ENCODE measurements at regions of chr9 and their contacts with region 1.

Region 1: GRCh38 chr9:117907420-117907819 is 203.2 kb downstream of the TLR4 start:
- DNase-seq: no peak
- H3K4me3 ChIP-seq: no peak overlapping the region
- H3K27ac ChIP-seq: no peak overlapping the region
- H3K4me1 ChIP-seq: no peaks in the 10 kb centered on the region
- H3K27me3 ChIP-seq: no peaks in the 10 kb centered on the region
- CTCF ChIP-seq: no peak
- EP300 ChIP-seq: no peak
- POLR2A ChIP-seq: no peak

Region 2: DNA sequence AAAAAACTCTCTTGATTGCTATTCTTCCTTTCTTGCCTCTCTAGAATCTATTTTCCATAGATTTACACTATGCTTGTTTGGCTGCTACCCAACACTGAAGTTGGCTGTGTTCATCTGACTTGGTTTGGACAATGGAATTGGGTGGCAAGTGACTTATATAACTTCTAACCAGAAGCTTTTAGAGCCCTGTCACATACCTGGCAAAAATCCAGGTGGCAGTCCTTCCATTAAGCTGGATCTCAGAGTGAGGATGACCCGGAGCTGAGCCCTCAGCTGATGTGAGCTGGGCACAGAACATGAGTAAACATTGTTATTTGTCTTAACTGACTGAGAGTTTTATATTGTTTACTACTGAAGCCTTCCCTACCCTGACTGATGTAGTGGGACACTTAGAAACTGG is 22.5 kb after region 1 on chr9:
- in situ Hi-C with region 1: no loop called
- intact Hi-C with region 1: loop called (anchors 2 kb)
- DNase-seq: no peak
- H3K4me3 ChIP-seq: no peak overlapping the region
- H3K27ac ChIP-seq: no peak overlapping the region
- H3K4me1 ChIP-seq: no peaks in the 10 kb centered on the region
- H3K27me3 ChIP-seq: no peaks in the 10 kb centered on the region
- CTCF ChIP-seq: no peak
- EP300 ChIP-seq: no peak
- POLR2A ChIP-seq: no peak

Region 3: DNA sequence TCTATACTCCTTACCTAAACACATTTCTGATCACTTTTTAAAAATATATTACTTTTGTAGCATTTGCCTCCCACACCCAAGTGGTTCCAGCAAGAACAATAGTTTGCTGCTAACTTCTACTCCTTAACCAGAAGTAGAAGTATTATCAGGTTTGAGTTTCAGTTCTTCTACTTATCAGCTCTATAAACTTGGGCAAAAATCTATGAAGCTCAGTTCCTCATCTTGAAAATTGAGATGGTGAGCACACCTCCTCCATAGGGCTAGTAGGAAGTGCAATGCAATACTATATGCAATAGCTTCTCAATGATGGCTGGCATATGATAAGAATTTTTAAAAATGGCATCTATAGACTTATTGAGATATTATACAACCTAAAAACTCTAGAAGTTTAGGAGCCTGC is 80.5 kb after region 1 on chr9:
- in situ Hi-C with region 1: no loop called
- intact Hi-C with region 1: no loop called
- DNase-seq: no peak
- H3K4me3 ChIP-seq: no peak overlapping the region
- H3K27ac ChIP-seq: no peak overlapping the region
- H3K4me1 ChIP-seq: no peaks in the 10 kb centered on the region
- H3K27me3 ChIP-seq: no peaks in the 10 kb centered on the region
- CTCF ChIP-seq: no peak
- EP300 ChIP-seq: no peak
- POLR2A ChIP-seq: no peak

Measured in transverse colon (tissue), 4 donors.